B cell (primary cell): ENCODE measurements at regions of chr10 and their contacts with region 1.

Region 1: GRCh38 chr10:35635576-35635975 is 6.5 kb downstream of the FZD8 start:
- DNase-seq: peak; percentile 79
- ATAC-seq: peak; percentile 68
- H3K4me3 ChIP-seq: no peak overlapping the region
- H3K4me3 Mint-ChIP-seq: no peak overlapping the region
- H3K27ac ChIP-seq: no peak overlapping the region
- H3K27ac Mint-ChIP-seq: no peak overlapping the region
- H3K4me1 ChIP-seq: peaks cover 10 to 14% of the 10 kb centered on the region in 2 donors
- H3K4me1 Mint-ChIP-seq: peaks cover 17% of the 10 kb centered on the region
- H3K27me3 ChIP-seq: peaks cover 0 to 40% (median 23%) of the 10 kb centered on the region in 4 experiments
- H3K27me3 Mint-ChIP-seq: peaks cover 39% of the 10 kb centered on the region
- CTCF ChIP-seq: peak; percentile 96

Region 2: DNA sequence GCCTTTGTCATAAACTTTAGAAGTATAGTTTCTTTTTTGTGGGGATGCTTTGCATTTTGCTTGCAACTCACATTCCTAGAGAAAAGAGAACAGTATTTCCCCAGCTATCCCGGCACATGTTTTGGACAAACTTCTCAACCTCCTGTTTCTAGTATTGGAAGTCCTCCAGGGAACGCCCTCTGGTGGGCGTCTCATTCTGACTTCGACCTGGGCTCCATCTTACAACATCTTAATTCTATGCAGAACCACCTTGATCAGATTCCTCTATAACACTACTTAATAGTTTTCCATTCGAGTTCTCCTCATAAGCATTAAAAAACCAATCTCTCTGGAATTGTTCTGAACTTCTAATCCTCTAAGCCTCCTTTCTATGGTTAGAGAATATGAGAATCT is 146.1 kb after region 1 on chr10:
- CTCF ChIA-PET with region 1: interaction called, 16 read pairs
- POLR2A ChIA-PET with region 1: no interaction called
- intact Hi-C with region 1: loop called (anchors 1 kb)
- DNase-seq: peak; percentile 8
- ATAC-seq: no peak
- H3K4me3 ChIP-seq: no peak overlapping the region
- H3K4me3 Mint-ChIP-seq: no peak overlapping the region
- H3K27ac ChIP-seq: no peak overlapping the region
- H3K27ac Mint-ChIP-seq: no peak overlapping the region
- H3K4me1 ChIP-seq: no peaks in the 10 kb centered on the region
- H3K4me1 Mint-ChIP-seq: no peaks in the 10 kb centered on the region
- H3K27me3 ChIP-seq: no peaks in the 10 kb centered on the region
- H3K27me3 Mint-ChIP-seq: peaks cover 7% of the 10 kb centered on the region
- CTCF ChIP-seq: no peak

Region 3: GRCh38 chr10:36725581-36726520 is 1090.3 kb after region 1 on chr10:
- CTCF ChIA-PET with region 1: interaction called, 14 read pairs
- POLR2A ChIA-PET with region 1: no interaction called
- intact Hi-C with region 1: no loop called
- DNase-seq: peak; percentile 31
- ATAC-seq: no peak
- H3K4me3 ChIP-seq: no peak overlapping the region
- H3K4me3 Mint-ChIP-seq: no peak overlapping the region
- H3K27ac ChIP-seq: no peak overlapping the region
- H3K27ac Mint-ChIP-seq: no peak overlapping the region
- H3K4me1 ChIP-seq: no peaks in the 10 kb centered on the region
- H3K4me1 Mint-ChIP-seq: no peaks in the 10 kb centered on the region
- H3K27me3 ChIP-seq: no peaks in the 10 kb centered on the region
- H3K27me3 Mint-ChIP-seq: no peaks in the 10 kb centered on the region
- CTCF ChIP-seq: no peak

Region 4: DNA sequence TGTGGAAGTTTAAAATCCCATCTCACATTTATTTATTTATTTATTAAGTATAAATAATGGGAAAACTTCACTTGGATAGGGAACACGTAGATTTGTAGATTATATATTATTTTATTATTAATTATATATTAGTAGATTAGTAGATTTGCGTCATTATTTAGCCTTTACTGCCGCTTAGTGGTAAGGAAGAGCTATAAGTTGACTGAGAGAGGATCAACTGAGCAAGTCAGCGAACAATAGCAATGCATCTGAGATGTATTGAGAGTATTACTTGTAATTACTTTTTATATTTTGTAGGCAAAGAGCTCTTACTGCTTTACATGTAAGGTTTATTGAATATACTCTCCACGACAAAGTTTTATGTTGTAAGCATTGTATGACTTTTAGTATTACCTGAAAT is 1245.3 kb after region 1 on chr10:
- CTCF ChIA-PET with region 1: interaction called, 24 read pairs
- POLR2A ChIA-PET with region 1: interaction called, 3 read pairs
- intact Hi-C with region 1: no loop called
- DNase-seq: peak; percentile 23
- ATAC-seq: no peak
- H3K4me3 ChIP-seq: no peak overlapping the region
- H3K4me3 Mint-ChIP-seq: no peak overlapping the region
- H3K27ac ChIP-seq: no peak overlapping the region
- H3K27ac Mint-ChIP-seq: no peak overlapping the region
- H3K4me1 ChIP-seq: no peaks in the 10 kb centered on the region
- H3K4me1 Mint-ChIP-seq: no peaks in the 10 kb centered on the region
- H3K27me3 ChIP-seq: no peaks in the 10 kb centered on the region
- H3K27me3 Mint-ChIP-seq: peaks cover 8% of the 10 kb centered on the region
- CTCF ChIP-seq: peak; percentile 60